Transverse colon (tissue), 4 donors: ENCODE measurements at regions of chr9 and their contacts with region 1.

Region 1: DNA sequence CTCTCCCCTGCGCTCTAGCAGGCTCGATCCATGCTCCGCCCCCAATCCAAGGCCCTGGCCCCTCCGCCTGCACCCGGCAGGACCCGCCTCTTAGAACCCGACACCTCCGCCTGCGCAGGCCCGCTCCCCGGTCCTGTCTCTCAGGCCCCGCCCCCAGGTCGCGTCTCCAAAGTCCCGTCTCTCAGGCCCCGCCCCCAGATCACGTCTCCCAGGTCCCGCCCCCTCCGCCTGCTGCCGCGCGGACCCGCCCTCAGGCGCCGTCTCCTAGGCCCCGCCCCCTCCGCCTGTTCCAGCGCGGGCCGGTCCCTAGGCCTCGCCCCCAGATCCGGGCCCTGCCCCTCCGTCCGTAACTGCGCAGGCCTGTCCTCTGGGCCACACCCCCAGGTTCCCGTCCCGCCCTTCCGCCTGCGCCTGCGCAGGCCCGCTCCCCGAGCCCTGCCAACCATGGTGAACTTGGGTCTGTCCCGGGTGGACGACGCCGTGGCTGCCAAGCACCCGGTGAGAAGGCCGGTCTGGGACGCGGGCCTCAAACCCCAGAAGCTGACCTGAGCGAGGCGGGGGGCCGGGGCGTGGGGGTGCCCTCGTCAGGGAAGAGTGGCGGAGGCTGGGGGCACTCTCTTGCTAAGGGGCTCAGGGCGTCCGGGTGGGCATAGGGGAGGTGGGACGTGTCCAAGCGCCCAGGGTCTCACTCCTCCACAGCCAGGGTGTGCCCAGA is at the start of gene TMEM141:
- DNase-seq: peak; percentile 100
- H3K4me3 ChIP-seq: peak within 1 kb of the TSS; percentile 54 to 86 (median 58)
- H3K27ac ChIP-seq: peak within 1 kb of the TSS; percentile 95 to 99 (median 96)
- H3K4me1 ChIP-seq: peaks cover 19 to 72% (median 56%) of the 10 kb centered on the region in 4 donors
- H3K27me3 ChIP-seq: no peaks in the 10 kb centered on the region
- CTCF ChIP-seq: no peak
- EP300 ChIP-seq: no peak
- POLR2A ChIP-seq: peak; percentile 84
- total RNA-seq, gene TMEM141: 179 to 392 (median 224) TPM

Region 2: DNA sequence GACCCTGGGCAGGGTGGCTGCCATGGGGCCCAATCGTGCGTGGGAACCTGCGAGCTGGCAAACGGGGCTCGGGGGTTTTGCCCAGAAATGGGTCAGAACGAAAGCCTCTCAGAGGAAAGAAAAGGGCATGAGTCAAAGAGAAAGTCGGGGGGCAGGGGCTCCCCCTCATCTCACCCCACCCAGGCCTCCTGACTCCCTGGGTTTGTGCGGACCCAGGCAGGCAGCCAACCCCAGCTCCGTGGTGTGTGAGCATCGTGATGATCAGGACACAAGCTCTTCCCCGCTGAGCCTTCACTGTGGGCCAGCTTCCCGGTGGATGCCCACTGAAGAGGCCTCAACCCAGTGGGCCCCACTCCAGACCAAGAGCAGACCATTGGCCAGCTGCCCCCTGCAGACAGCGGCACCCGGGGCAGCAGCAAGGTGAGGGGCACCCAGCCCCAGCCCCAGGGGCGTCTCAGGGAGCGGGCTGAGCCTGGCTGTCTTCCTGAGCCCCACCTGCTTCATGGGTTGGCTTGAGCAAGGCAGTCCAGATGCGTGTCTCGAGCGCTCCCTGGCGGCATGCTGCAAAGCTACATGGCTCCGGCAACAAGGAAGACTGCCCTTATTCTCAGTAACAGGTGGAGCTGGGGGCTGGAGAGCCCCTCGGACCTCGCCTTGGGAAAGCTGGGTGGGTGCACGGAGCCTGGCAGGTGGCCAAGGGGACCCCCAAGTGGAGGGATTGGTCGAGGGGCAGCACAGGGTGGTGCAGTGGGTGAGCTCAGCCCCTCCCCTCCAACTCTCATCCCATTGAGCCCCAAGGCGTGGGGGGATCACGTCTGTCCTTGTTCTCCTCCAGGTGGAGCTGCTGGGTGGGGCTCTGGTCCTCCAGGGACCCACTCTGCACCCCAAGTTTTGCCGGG is 244.0 kb after region 1 on chr9:
- in situ Hi-C with region 1: loop called (anchors 10 to 25 kb)
- intact Hi-C with region 1: loop called (anchors 2 kb)
- DNase-seq: peak; percentile 85
- H3K4me3 ChIP-seq: no peak overlapping the region
- H3K27ac ChIP-seq: peak overlapping the region; percentile 27 to 66 (median 34)
- H3K4me1 ChIP-seq: peaks cover 7 to 29% (median 18%) of the 10 kb centered on the region in 4 donors
- H3K27me3 ChIP-seq: no peaks in the 10 kb centered on the region
- CTCF ChIP-seq: peak; percentile 88 to 95 (median 90)
- EP300 ChIP-seq: no peak
- POLR2A ChIP-seq: no peak

Region 3: GRCh38 chr9:137046098-137046787 is 255.2 kb after region 1 on chr9 and contains the start of gene NPDC1:
- in situ Hi-C with region 1: loop called in 3 of 4 experiments (anchors 10 to 25 kb)
- intact Hi-C with region 1: no loop called
- DNase-seq: peak; percentile 86
- H3K4me3 ChIP-seq: peak within 1 kb of the TSS; percentile 16 to 60 (median 50)
- H3K27ac ChIP-seq: peak within 1 kb of the TSS; percentile 56 to 75 (median 64)
- H3K4me1 ChIP-seq: peaks cover 22 to 38% (median 33%) of the 10 kb centered on the region in 4 donors
- H3K27me3 ChIP-seq: peaks cover 64% of the 10 kb centered on the region
- CTCF ChIP-seq: peak; percentile 85 to 94 (median 92)
- EP300 ChIP-seq: no peak
- POLR2A ChIP-seq: no peak
- total RNA-seq, gene NPDC1: 58.0 to 972 (median 274) TPM